ENCODE measurements at regions of chr15 and their contacts with region 1.

Region 1: DNA sequence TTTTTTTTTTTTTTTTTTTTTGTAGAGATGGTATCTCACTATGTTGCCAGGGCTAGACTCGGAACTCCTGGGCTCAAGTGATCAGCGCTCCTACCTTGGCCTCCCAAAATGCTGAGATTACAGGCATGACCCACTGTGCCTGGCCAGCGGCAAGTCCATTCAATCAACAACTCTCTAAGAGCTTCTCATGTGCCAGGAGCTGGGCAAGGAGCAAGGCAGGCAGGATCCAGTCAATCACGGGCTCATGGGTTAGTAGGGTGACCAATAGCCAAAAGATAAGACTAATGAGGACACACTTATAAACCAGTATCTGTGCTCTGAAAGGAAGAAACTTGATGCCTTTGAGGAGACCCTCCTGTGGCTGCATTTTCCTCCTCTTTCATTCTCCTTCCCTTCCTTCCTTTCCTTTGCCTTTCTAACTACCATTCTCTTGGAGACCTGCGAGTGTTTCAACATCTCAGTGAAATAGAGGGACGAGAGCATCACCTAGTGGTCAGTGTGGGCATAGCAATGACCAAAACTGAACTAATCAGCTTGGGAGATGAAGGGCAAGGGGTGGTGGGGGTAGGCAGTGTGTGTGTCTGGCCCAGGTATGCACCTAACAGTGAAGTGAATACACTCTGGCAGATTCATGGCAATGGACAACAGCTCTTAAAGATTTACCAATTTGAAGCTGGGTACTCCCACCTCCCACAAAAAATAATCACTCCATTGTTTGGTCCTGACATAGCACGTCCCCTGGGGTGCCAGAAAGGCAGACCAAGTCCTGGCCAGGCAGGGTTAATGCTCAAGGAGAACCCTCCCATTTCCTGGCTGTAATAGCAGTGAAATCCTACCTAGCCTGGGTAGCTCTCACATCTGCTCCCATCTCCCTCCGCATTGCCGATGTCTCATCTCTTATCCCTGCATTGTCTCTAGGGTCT is 6.2 kb downstream of the RPP25 start:
- DNase-seq: peak; percentile 76 to 89 (median 78)
- H3K4me3 ChIP-seq: no peak overlapping the region
- H3K27ac ChIP-seq: no peak overlapping the region
- H3K4me1 ChIP-seq: peaks cover 0 to 19% (median 11%) of the 10 kb centered on the region in 4 experiments
- H3K27me3 ChIP-seq: no peaks in the 10 kb centered on the region

Region 2: DNA sequence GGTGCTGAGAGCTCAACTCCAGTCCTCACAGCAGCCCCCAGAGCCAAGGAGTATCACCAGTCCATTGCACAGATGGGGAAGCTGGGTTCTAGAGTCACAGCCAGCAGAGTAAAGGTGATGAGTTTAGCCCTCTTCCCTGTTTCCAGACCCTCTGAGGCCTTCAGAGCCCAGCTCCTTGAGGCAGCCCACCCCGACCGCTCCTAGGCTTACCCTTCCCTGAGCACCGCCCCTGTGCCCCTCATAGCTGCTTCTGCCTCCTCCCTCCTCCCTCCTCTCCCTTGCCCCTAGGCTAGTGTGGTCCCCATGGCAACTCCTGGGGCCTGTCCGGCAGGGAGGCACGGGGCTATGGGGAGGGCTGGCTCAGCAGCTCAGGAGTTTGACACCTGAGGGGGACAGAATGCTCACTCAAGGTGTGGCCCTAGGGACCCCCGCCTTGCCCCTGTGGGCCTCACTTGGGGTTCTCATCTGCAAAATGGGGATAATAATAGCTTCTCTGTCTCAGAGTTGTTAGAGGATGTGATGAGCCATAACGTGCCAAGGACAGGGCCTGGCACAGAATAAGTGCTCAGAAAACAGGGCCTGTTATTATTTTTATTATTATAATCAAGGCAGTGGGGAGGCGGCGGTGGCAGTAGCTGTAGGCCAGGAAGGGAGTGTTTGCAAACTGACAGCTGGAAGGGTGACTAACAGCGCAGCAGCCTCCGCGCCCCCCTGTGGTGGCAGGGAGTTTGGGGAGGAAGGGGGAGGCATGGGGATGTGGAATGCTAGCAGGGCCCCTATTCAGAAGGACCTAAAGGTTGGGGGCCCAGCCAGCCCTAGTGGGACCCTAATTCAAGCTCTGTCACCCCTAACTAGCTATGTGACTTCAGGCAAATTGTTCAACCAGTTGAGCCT is 157.0 kb before region 1 on chr15:
- CTCF ChIA-PET with region 1: interaction called, 11 read pairs
- POLR2A ChIA-PET with region 1: no interaction called
- DNase-seq: peak in 2 of 3 donors; percentile 78 to 81
- H3K4me3 ChIP-seq: no peak overlapping the region
- H3K27ac ChIP-seq: peak overlapping the region; percentile 19 to 89
- H3K4me1 ChIP-seq: peaks cover 38 to 86% (median 81%) of the 10 kb centered on the region in 4 experiments
- H3K27me3 ChIP-seq: no peaks in the 10 kb centered on the region

Region 3: GRCh38 chr15:74937596-74938296 is 12.6 kb before region 1 on chr15 and contains the start of gene COX5A:
- CTCF ChIA-PET with region 1: interaction called, 30 read pairs
- POLR2A ChIA-PET with region 1: interaction called, 5 read pairs
- DNase-seq: peak; percentile 95 to 98 (median 97)
- H3K4me3 ChIP-seq: peak within 1 kb of the TSS; percentile 90 to 99 (median 94)
- H3K27ac ChIP-seq: peak within 1 kb of the TSS; percentile 75 to 91
- H3K4me1 ChIP-seq: peaks cover 0 to 23% (median 11%) of the 10 kb centered on the region in 4 experiments
- H3K27me3 ChIP-seq: no peaks in the 10 kb centered on the region

Region 4: GRCh38 chr15:74960995-74961588 is 10.8 kb after region 1 on chr15:
- CTCF ChIA-PET with region 1: interaction called, 11 read pairs
- POLR2A ChIA-PET with region 1: no interaction called
- DNase-seq: no peak
- H3K4me3 ChIP-seq: no peak overlapping the region
- H3K27ac ChIP-seq: no peak overlapping the region
- H3K4me1 ChIP-seq: peaks cover 0 to 41% (median 35%) of the 10 kb centered on the region in 4 experiments
- H3K27me3 ChIP-seq: peaks cover 2 to 38% (median 27%) of the 10 kb centered on the region in 5 experiments

Measured in common myeloid progenitor, CD34-positive (primary cell).